WTC11 (cell line): ENCODE measurements at regions of chr16 and their contacts with region 1.

Region 1: DNA sequence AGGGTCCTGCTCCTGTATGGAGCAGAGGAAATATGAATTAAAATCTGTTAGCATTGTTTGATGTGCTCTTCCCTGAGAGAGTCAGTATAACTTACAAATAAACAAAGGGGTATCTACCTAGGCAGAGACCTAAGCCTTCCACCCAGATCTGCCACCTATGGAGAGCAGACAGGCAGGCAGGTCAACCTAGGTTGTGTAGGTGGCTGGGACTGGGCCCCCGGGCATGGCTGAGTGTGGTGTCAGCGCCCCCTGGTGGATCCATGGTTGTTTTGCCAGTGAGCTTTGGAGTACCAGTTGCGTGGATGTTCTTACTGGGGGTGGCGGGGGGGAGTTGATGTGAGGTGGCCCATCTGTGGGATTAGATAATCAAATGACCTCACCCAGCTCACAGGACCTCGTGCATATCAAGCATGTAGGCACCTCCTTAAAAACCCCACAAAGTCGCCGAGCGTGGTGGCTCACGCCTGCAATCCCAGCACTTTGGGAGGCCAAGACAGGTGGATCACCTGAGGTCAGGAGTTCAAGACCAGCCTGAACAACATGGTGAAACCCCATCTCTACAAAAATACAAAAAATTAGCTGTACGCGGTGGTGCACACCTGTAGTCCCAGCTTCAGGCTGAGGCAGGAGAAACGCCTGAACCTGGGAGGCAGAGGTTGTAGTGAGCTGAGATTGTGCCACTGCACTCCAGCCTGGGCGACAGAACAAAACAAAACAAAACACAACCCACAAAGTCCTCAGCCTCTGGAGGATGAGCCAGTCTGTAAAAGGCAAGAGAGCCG is 17.6 kb downstream of the DUS2 start:
- DNase-seq: peak; percentile 93
- ATAC-seq: peak; percentile 100
- H3K4me3 Mint-ChIP-seq: no peak overlapping the region
- H3K27ac Mint-ChIP-seq: peak overlapping the region; percentile 86
- H3K4me1 Mint-ChIP-seq: no peaks in the 10 kb centered on the region
- H3K27me3 Mint-ChIP-seq: no peaks in the 10 kb centered on the region
- CTCF ChIP-seq: peak; percentile 88

Region 2: GRCh38 chr16:67935402-67936123 is 105.1 kb before region 1 on chr16:
- CTCF ChIA-PET with region 1: interaction called, 11 read pairs
- POLR2A ChIA-PET with region 1: no interaction called
- DNase-seq: peak; percentile 98
- ATAC-seq: peak; percentile 92
- H3K4me3 Mint-ChIP-seq: peak overlapping the region; percentile 100
- H3K27ac Mint-ChIP-seq: peak overlapping the region; percentile 100
- H3K4me1 Mint-ChIP-seq: peaks cover 23% of the 10 kb centered on the region
- H3K27me3 Mint-ChIP-seq: no peaks in the 10 kb centered on the region
- CTCF ChIP-seq: no peak

Region 3: GRCh38 chr16:67979955-67980678 is 60.6 kb before region 1 on chr16 and contains the start of gene DPEP3:
- CTCF ChIA-PET with region 1: interaction called, 13 read pairs
- POLR2A ChIA-PET with region 1: no interaction called
- DNase-seq: peak; percentile 83
- ATAC-seq: peak; percentile 89
- H3K4me3 Mint-ChIP-seq: no peak within 1 kb of the TSS
- H3K27ac Mint-ChIP-seq: no peak within 1 kb of the TSS
- H3K4me1 Mint-ChIP-seq: peaks cover 6% of the 10 kb centered on the region
- H3K27me3 Mint-ChIP-seq: peaks cover 13% of the 10 kb centered on the region
- CTCF ChIP-seq: peak; percentile 80
- total RNA-seq, gene DPEP3: 1.6 to 2.7 TPM (median 2.5 TPM) in 3 replicates

Region 4: GRCh38 chr16:68015396-68016105 is 25.1 kb before region 1 on chr16 and contains the start of gene DPEP2NB:
- CTCF ChIA-PET with region 1: interaction called, 13 read pairs
- POLR2A ChIA-PET with region 1: no interaction called
- DNase-seq: no peak
- ATAC-seq: no peak
- H3K4me3 Mint-ChIP-seq: no peak within 1 kb of the TSS
- H3K27ac Mint-ChIP-seq: peak within 1 kb of the TSS; percentile 10; the same call in 1 of the 2 replicates
- H3K4me1 Mint-ChIP-seq: no peaks in the 10 kb centered on the region
- H3K27me3 Mint-ChIP-seq: no peaks in the 10 kb centered on the region; the same call in 1 of the 2 replicates
- CTCF ChIP-seq: no peak
- total RNA-seq, gene DPEP2NB: 0.32 TPM in 1 of 3 replicates, not detected in the others

Region 5: DNA sequence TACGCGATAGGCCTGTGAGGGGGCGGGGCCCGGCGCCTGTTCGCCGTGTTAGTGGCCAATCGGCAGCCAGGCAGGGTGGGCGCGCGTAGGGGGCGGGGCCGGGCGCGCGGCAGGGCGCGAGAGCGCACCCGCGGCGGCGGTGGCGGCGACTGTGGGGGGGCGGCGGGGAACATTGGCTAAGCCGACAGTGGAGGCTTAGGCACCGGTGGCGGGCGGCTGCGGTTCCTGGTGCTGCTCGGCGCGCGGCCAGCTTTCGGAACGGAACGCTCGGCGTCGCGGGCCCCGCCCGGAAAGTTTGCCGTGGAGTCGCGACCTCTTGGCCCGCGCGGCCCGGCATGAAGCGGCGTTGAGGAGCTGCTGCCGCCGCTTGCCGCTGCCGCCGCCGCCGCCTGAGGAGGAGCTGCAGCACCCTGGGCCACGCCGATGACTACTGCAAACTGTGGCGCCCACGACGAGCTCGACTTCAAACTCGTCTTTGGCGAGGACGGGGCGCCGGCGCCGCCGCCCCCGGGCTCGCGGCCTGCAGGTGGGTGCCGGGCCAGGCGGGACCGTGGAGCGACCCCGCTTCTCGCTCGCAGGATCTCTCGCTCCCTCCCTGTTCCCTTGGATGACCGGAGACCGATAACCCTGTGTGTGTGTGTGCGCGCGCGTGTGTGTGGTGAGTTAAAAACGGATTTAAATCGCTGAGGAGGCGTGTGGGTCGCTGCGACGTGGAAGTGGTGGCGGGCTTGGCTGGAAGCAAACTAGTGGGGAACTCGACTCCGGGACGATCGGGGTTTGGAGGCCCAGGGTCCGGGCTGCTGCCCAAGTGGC is 44.8 kb after region 1 on chr16 and contains the start of gene NFATC3:
- CTCF ChIA-PET with region 1: interaction called, 29 read pairs
- POLR2A ChIA-PET with region 1: no interaction called
- DNase-seq: peak; percentile 98
- ATAC-seq: peak; percentile 65
- H3K4me3 Mint-ChIP-seq: peak within 1 kb of the TSS; percentile 97
- H3K27ac Mint-ChIP-seq: peak within 1 kb of the TSS; percentile 78
- H3K4me1 Mint-ChIP-seq: peaks cover 20% of the 10 kb centered on the region
- H3K27me3 Mint-ChIP-seq: no peaks in the 10 kb centered on the region
- CTCF ChIP-seq: no peak
- total RNA-seq, gene NFATC3: 32.5 to 34.6 TPM (median 33.3 TPM) in 3 replicates